Activated T-helper 1 cell treated with anti-CD3 and anti-CD28 coated beads, Interleukin-12 subunit alpha, Interleukin-12 subunit beta, Interleukin-2, Interleukin-4 antibody, amounts not matched to agents 30 ng/mL and 10 ng/mL and 1 ng/mL, durations not matched to agents 14 hours and 24 hours and 36 hours (primary cell): ENCODE measurements at regions of chr18 and their contacts with region 1.

Region 1: GRCh38 chr18:3771121-3771971 is 321.4 kb downstream of the TGIF1 start:
- DNase-seq: peak; percentile 73
- H3K4me3 Mint-ChIP-seq: peak overlapping the region; percentile 57
- H3K27ac Mint-ChIP-seq: no peak overlapping the region
- H3K4me1 Mint-ChIP-seq: peaks cover 14% of the 10 kb centered on the region
- H3K27me3 Mint-ChIP-seq: peaks cover 34% of the 10 kb centered on the region

Region 2: DNA sequence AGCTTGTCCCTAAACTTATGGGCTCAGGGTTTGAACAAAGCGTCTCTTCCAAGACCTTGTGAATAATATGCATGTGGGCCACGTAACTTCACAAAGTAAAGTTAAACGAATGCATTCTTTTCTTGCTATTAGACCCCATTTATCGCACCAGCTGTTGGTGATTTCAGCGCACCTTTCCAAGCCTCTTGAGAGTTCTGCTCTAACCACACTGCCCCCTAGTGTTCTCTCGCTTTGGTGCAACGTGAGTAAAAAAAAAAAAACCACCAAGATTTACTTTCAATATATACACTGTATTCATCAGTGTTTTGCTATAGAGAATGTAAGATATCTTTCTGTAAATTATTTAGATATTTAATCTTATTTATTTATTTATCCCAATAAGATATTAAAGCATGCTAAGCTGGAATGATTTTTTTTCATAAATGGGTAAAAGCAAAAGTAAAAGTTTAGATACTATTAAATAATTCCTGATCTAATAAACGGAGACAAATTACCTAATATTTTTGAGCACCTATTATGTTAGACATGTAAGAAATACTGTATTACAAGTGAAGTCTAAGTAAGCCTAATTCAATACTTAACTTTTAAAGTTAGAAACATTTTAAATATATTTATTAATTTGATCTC is 224.2 kb after region 1 on chr18:
- intact Hi-C with region 1: loop called (anchors 1 kb)
- DNase-seq: peak; percentile 52
- H3K4me3 Mint-ChIP-seq: no peak overlapping the region
- H3K27ac Mint-ChIP-seq: no peak overlapping the region
- H3K4me1 Mint-ChIP-seq: no peaks in the 10 kb centered on the region
- H3K27me3 Mint-ChIP-seq: peaks cover 9% of the 10 kb centered on the region

Region 3: DNA sequence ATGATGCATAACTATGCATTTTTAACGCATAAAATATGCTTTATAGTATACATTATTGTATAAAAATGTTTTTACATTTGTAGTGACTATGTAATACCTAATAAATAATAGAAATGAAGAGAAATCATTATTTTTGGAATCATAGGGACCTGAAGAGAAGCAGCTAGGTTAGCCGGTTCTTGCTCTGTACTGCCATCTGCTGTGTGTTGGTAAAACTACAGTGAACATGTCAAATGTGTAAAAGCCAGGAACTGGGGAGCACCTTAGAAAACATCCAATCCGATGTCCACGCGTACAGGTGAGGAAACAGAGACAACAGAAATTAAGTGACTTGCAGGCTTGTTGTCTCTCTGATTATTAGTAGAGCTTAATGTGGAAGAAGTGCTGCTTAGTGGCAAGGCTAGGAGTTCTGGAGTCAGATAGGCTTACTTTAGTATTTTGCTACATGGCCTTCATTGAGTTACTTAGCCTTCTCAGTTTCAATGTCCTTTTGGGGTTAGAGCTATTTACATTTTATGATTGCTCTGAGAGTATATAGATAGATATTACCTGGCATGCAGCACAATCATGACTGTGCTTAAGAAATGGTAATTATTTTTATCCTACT is 297.3 kb after region 1 on chr18:
- intact Hi-C with region 1: loop called (anchors 1 kb)
- DNase-seq: peak; percentile 5
- H3K4me3 Mint-ChIP-seq: no peak overlapping the region
- H3K27ac Mint-ChIP-seq: no peak overlapping the region
- H3K4me1 Mint-ChIP-seq: no peaks in the 10 kb centered on the region
- H3K27me3 Mint-ChIP-seq: peaks cover 2% of the 10 kb centered on the region

Region 4: GRCh38 chr18:5057386-5058348 is 1286.3 kb after region 1 on chr18:
- intact Hi-C with region 1: loop called (anchors 5 kb)
- DNase-seq: peak; percentile 30
- H3K4me3 Mint-ChIP-seq: no peak overlapping the region
- H3K27ac Mint-ChIP-seq: no peak overlapping the region
- H3K4me1 Mint-ChIP-seq: peaks cover 15% of the 10 kb centered on the region
- H3K27me3 Mint-ChIP-seq: no peaks in the 10 kb centered on the region